ENCODE measurements at regions of chr12 and their contacts with region 1.

Region 1: DNA sequence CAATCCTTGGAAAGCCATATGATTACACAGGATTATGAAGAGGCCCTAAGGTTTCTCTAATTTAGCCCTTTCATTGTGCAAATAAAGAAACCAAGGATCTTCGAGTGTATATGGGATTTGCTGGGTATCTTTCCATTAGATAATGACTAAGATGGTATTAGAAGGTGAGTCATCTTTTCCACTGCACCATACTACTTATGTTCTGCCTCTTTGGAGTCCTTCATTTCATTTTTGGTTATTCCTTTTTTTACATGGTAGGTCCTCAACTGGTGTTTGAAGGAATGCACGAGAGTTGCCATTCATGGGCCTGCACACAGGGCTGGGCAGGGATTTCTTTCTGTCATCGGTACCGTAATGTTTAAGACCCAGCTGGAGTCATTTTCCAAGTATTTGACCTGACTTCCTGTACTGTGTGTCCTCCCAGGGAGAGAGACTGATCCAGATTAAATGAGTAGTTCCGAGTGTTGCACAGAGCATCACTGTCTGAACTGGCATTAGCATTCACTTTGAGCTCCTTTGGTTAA is 85.7 kb downstream of the BORCS5 start:
- DNase-seq: peak; percentile 75
- H3K4me3 ChIP-seq: no peak overlapping the region
- H3K27ac ChIP-seq: peak overlapping the region; percentile 83
- H3K4me1 ChIP-seq: peaks cover 54% of the 10 kb centered on the region
- H3K27me3 ChIP-seq: no peaks in the 10 kb centered on the region
- CTCF ChIP-seq: no peak
- POLR2A ChIP-seq: no peak

Region 2: DNA sequence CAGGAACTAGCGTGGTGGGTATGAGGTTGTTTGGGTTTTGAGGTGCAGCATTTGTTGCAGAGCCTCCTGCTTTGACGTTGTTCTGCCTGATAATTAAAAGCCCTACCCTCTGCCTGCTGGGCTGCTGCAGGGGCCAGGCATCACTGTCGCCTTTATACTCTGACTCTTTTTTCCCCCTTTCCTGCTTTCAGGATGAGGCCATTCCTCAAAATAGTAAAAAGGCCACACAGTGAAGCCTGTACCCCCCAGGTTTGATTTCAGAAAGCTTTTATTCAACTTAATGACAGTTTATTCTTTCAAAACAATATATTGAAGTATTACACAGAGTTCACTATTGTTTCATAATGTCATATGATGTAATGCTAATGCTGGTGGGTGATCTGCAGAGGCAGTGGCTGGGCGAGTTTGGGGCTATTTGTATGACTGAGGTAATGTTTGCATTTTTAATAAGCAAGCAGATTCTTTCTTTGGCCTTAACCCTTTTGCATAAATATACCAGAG is 76.6 kb before region 1 on chr12:
- CTCF ChIA-PET with region 1: no interaction called
- POLR2A ChIA-PET with region 1: no interaction called
- dilution Hi-C with region 1: no loop called
- intact Hi-C with region 1: no loop called
- DNase-seq: no peak
- H3K4me3 ChIP-seq: no peak overlapping the region
- H3K27ac ChIP-seq: no peak overlapping the region
- H3K4me1 ChIP-seq: no peaks in the 10 kb centered on the region
- H3K27me3 ChIP-seq: no peaks in the 10 kb centered on the region
- CTCF ChIP-seq: no peak
- POLR2A ChIP-seq: no peak

Region 3: DNA sequence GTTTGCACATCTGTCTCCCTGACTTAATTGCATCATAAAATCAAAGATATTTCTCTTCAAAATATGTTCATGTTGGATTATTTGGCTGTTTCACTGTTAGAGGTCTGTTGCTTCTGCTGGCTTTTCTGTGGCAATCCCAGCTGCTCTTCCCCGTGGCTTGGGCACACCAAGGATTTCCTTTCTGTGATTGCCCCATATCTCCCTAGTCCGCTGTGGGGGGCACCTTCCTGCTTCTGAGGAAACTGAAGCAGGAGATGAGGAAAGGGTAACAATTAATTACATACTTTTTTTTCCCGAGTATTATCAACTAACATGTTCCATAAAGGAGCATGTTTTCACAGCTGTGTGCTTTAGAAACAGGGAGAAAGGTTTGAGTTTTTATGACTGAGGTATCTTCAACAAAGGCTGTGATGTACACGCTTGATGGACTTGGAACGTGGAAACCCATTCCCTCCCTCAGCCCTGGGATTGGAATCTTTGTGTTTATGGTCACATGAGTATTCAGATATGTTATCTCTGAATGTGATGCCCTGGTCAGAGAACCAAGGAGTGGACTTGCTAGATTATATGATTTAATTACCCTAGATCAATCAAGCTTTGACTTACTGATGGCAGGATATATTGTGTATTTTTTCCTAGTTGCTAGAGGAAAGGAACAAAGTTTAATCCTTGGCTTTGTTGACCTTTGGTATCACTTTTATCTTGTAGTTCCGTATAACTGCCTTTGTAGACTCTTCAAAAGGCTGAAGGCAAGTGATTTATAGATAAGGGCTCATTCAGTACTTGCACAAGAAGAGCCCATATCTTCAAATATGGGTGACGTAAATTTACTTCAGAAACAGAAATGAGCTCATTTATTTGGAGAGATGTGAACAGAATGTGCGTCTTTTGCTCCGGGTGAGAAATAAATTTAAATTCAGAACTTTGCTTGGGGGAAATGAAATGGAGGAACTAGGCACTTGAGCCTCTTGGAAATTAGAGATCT is 39.1 kb before region 1 on chr12:
- CTCF ChIA-PET with region 1: interaction called, 4 read pairs
- POLR2A ChIA-PET with region 1: no interaction called
- dilution Hi-C with region 1: no loop called
- intact Hi-C with region 1: loop called (anchors 2 kb)
- DNase-seq: peak; percentile 75
- H3K4me3 ChIP-seq: no peak overlapping the region
- H3K27ac ChIP-seq: no peak overlapping the region
- H3K4me1 ChIP-seq: peaks cover 6% of the 10 kb centered on the region
- H3K27me3 ChIP-seq: no peaks in the 10 kb centered on the region
- CTCF ChIP-seq: no peak
- POLR2A ChIP-seq: no peak

Region 4: GRCh38 chr12:12474931-12475795 is 32.6 kb after region 1 on chr12:
- CTCF ChIA-PET with region 1: interaction called, 3 read pairs
- POLR2A ChIA-PET with region 1: no interaction called
- dilution Hi-C with region 1: no loop called
- intact Hi-C with region 1: loop called (anchors 1 kb)
- DNase-seq: peak; percentile 80
- H3K4me3 ChIP-seq: no peak overlapping the region
- H3K27ac ChIP-seq: peak overlapping the region; percentile 87
- H3K4me1 ChIP-seq: peaks cover 16% of the 10 kb centered on the region
- H3K27me3 ChIP-seq: no peaks in the 10 kb centered on the region
- CTCF ChIP-seq: no peak
- POLR2A ChIP-seq: no peak

Region 5: GRCh38 chr12:12505544-12506495 is 63.2 kb after region 1 on chr12:
- CTCF ChIA-PET with region 1: no interaction called
- POLR2A ChIA-PET with region 1: no interaction called
- dilution Hi-C with region 1: no loop called
- intact Hi-C with region 1: no loop called
- DNase-seq: peak; percentile 70
- H3K4me3 ChIP-seq: peak overlapping the region in 1 of 3 experiments; percentile 59
- H3K27ac ChIP-seq: peak overlapping the region; percentile 21
- H3K4me1 ChIP-seq: peaks cover 16% of the 10 kb centered on the region
- H3K27me3 ChIP-seq: no peaks in the 10 kb centered on the region
- CTCF ChIP-seq: no peak
- POLR2A ChIP-seq: no peak